ENCODE measurements at regions of chr10 and their contacts with region 1.

Region 1: DNA sequence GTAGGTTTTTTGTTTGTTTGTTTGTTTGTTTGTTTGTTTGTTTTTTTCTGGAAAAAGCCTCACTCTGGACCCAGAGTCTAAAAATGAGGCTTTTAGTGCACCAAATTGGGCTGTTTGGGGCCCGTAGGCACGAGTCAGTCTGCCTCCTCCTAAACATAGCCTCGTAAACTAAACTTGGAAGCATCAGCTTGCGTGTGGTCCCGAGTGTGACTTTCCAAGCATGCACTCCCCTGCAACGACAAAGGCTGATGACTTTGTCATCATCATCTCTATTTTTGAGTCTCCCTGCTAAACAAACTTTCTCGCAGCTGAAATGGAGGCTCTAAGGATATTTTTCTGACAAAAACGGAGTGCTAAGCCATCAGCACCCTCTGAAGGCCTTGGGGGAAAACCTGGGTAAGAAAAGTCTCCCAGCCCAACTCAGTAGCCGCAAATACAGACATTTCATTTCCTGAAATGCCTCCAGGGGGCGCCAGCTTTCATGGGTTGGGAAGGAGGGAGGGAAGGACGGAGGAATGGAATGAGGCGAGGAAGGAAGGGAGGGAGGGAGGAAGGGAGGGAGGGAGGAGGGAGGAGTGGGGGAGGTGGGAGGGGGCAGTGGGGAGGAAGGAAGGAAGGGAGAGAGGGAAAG is 245.9 kb downstream of the KCNMA1 start:
- DNase-seq: peak; percentile 87
- ATAC-seq: peak; percentile 61
- H3K4me3 ChIP-seq: no peak overlapping the region
- H3K27ac ChIP-seq: peak overlapping the region; percentile 64
- H3K4me1 ChIP-seq: peaks cover 26% of the 10 kb centered on the region
- H3K27me3 ChIP-seq: no peaks in the 10 kb centered on the region
- CTCF ChIP-seq: peak; percentile 77
- POLR2A ChIP-seq: no peak
- RAD21 ChIP-seq: peak; percentile 77

Region 2: DNA sequence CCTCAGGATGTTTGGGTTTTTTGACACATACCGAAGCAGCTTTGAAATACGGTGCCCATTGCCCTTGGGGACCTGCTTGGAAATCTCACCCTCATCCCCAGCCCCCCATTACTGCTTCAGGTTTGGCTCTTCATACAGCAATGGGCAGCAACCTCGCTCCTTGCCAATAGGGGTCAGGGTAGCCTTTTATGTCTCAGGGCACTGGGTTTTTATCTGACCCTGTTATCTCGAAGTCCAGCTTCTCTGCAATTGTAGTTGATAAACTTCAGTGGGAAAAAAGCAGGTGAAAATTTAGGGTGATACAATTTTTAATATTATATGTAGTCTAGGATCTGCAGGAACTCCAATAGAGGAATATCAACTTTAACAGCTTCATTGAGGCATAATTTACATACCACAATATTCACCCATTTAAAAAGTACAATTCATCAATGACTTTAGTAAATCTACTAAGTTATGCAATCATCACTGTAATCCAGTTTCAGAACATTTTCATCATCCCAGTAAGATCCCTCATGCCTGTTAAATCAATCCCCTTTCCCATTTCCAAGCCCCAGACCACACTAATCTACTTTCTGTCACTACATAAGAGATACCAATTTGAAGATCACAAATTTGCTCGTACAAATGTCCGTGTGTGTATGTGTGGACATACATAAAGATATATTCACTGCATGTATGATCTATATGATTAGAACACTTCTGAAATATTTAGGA is 140.3 kb before region 1 on chr10:
- CTCF ChIA-PET with region 1: interaction called, 7 read pairs
- POLR2A ChIA-PET with region 1: no interaction called
- dilution Hi-C with region 1: no loop called
- in situ Hi-C with region 1: no loop called
- intact Hi-C with region 1: loop called (anchors 5 kb)
- DNase-seq: peak; percentile 62
- ATAC-seq: peak; percentile 76
- H3K4me3 ChIP-seq: no peak overlapping the region
- H3K27ac ChIP-seq: no peak overlapping the region
- H3K4me1 ChIP-seq: peaks cover 10% of the 10 kb centered on the region
- H3K27me3 ChIP-seq: no peaks in the 10 kb centered on the region
- CTCF ChIP-seq: peak; percentile 78
- POLR2A ChIP-seq: no peak
- RAD21 ChIP-seq: peak; percentile 86

Region 3: GRCh38 chr10:77524281-77524711 is 132.6 kb after region 1 on chr10:
- CTCF ChIA-PET with region 1: no interaction called
- POLR2A ChIA-PET with region 1: no interaction called
- dilution Hi-C with region 1: no loop called
- in situ Hi-C with region 1: no loop called
- intact Hi-C with region 1: loop called (anchors 1 kb)
- DNase-seq: peak; percentile 87
- ATAC-seq: peak; percentile 89
- H3K4me3 ChIP-seq: no peak overlapping the region
- H3K27ac ChIP-seq: peak overlapping the region; percentile 52; the same call in 1 of the 2 replicates
- H3K4me1 ChIP-seq: peaks cover 22% of the 10 kb centered on the region
- H3K27me3 ChIP-seq: no peaks in the 10 kb centered on the region
- CTCF ChIP-seq: no peak
- POLR2A ChIP-seq: no peak
- RAD21 ChIP-seq: no peak; the same call in 1 of the 2 replicates

Region 4: DNA sequence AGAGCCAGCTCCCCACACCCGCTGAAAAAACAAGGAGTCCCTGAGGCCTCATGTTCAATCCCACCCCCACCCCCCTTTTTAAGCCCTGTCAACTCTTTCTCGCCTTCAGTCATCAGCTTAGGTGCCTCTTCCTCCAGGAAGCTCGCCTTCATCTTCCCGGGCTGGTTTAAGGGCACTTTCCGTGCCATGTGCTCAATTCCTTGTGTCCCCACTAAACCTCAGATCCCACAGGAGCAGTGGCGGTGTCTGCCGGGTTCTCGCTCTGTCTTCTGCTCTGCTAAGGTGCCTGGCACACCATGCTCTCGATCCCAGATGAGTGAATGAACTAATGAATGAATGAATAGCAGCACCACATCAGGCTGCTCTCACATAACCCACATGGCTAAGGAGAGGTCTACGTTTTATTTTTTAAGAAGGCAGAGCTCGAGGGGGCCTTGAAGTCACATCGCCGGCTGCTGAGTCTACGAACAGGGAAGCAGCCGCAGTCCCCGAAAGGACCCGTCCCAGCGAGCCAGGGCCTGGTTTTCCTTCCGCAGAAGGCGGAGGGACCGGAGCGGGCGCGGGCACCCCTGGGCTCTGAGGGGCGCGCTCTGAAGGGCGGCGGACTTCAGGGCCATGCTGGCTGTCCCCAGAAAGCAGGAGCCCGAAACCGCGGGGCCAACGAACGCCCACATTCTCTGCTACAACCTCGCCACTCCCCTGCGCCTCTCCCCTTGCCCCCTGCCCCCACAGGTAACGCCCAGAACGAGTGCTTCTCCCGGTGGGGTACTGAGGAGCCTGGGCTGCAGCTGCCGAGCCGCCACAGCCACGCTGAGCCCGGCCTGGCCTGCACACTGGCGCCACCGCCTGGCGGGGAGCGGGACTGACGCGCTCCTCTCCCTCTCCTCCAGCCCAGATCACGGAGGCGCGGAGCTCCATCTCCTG is 319.3 kb after region 1 on chr10:
- CTCF ChIA-PET with region 1: no interaction called
- POLR2A ChIA-PET with region 1: no interaction called
- dilution Hi-C with region 1: no loop called
- in situ Hi-C with region 1: no loop called
- intact Hi-C with region 1: loop called (anchors 5 kb)
- DNase-seq: peak; percentile 44
- ATAC-seq: peak; percentile 100
- H3K4me3 ChIP-seq: peak overlapping the region; percentile 33
- H3K27ac ChIP-seq: no peak overlapping the region; the same call in 1 of the 2 replicates
- H3K4me1 ChIP-seq: no peaks in the 10 kb centered on the region
- H3K27me3 ChIP-seq: peaks cover 6% of the 10 kb centered on the region; the same call in 1 of the 2 replicates
- CTCF ChIP-seq: peak; percentile 95
- POLR2A ChIP-seq: no peak
- RAD21 ChIP-seq: peak; percentile 87